ENCODE measurements at regions of chr1 and their contacts with region 1.

Region 1: GRCh38 chr1:62144238-62144831 is 50.3 kb upstream of the L1TD1 start:
- DNase-seq: no peak
- H3K4me3 ChIP-seq: no peak overlapping the region
- CTCF ChIP-seq: peak; percentile 65

Region 2: DNA sequence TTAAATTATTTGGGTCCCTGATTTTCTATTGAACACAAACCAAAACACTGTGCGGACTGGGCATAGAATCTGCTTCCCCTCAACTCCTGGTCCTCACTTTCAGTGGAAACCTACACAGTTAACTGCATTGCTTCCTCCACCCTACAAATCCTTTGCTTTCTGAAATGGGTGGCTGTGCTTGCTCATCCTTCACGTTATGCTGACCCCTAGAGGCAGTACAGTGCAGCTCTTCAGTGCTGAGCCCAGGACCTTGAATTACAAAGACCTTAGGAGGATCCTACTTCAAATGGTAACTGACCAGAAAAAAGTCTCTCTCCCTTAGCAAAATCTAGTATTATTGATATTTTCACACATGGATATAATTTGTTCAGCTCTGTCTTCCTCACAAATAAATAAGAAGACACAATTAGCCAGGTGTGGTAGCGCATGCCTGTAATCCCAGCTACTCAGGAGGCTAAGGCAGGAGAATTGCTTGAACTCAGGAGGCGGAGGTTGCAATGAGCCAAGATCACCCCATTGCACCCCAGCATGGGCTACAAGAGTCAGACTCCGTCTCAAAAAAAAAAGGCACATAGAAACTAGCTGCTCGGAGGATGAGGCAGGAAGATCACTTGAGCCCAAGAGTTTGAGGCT is 13.1 kb before region 1 on chr1:
- CTCF ChIA-PET with region 1: interaction called, 46 read pairs
- POLR2A ChIA-PET with region 1: no interaction called
- DNase-seq: no peak
- H3K4me3 ChIP-seq: no peak overlapping the region
- CTCF ChIP-seq: peak; percentile 91

Region 3: GRCh38 chr1:62154687-62155086 is 10.4 kb after region 1 on chr1:
- CTCF ChIA-PET with region 1: interaction called, 10 read pairs
- POLR2A ChIA-PET with region 1: no interaction called
- DNase-seq: no peak
- H3K4me3 ChIP-seq: no peak overlapping the region
- CTCF ChIP-seq: no peak

Region 4: DNA sequence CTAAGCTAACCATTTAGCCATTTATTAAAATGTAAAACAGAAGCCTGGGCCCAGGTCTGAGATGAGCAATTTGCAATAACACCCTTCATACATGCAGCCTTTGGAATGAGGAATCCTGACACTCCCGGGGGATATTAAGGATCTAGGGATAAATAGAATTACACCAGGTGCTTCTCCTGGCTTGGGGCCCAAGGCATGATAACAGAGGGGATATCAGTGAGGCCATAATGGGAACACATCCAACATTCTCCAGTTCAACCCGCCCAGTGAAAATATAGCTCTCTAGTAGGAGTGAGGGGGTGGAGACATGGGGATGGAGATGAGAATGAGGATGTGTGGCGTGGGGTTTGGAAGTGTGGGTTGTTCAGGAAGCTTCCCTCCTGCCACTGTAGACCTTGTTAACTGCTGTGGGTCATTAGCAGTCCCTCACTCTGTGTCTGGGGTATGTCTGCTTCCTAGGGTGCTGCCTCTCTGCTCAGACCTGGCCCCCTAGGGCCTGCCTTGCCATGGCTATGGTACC is 232.8 kb after region 1 on chr1:
- CTCF ChIA-PET with region 1: no interaction called
- POLR2A ChIA-PET with region 1: no interaction called
- DNase-seq: no peak
- H3K4me3 ChIP-seq: no peak overlapping the region
- CTCF ChIP-seq: no peak

Region 5: GRCh38 chr1:62407405-62408009 is 263.2 kb after region 1 on chr1:
- CTCF ChIA-PET with region 1: interaction called, 10 read pairs
- POLR2A ChIA-PET with region 1: no interaction called
- DNase-seq: peak; percentile 12
- H3K4me3 ChIP-seq: no peak overlapping the region
- CTCF ChIP-seq: peak; percentile 58